ENCODE measurements at regions of chr17 and their contacts with region 1.

Region 1: GRCh38 chr17:43766413-43767052 is 7.9 kb upstream of the SOST start:
- DNase-seq: no peak
- H3K4me3 ChIP-seq: no peak overlapping the region
- H3K27ac ChIP-seq: no peak overlapping the region
- H3K4me1 ChIP-seq: no peaks in the 10 kb centered on the region
- H3K27me3 ChIP-seq: no peaks in the 10 kb centered on the region
- CTCF ChIP-seq: peak; percentile 86 to 95

Region 2: DNA sequence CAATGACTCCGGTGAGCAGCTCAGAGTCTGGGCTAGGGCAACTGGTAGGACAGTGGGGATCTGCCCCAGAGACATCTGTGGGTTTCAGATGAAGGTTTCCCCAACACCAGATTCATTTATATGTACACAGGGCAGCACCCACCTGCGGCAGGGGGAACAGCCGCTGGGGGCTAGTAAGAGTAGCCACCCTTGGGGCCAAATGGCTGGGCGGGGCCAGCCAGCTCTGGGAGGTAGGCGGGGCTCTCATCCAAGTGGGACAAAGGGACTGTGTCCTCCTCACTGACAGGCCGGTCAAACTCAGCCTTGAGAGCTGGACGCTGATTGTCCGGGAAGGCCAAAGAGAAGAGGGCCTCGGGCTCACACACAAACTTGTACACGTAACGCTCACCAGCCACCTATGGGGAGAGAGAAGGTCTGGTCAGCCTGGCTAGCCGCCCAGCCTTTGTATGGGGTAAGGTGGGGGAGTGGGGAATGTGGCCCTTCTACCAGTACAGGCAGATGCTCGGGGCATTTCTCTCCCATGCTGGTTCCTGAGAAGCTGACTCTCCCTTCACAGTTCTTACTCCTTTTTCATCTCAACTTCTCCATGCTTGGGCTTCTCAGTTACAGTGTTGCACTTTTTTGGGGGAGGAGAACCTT is 238.1 kb before region 1 on chr17:
- CTCF ChIA-PET with region 1: no interaction called
- dilution Hi-C with region 1: loop called (anchors 5 kb)
- in situ Hi-C with region 1: no loop called
- intact Hi-C with region 1: no loop called
- DNase-seq: no peak
- H3K4me3 ChIP-seq: no peak overlapping the region
- H3K27ac ChIP-seq: no peak overlapping the region
- H3K4me1 ChIP-seq: peaks cover 27% of the 10 kb centered on the region
- H3K27me3 ChIP-seq: no peaks in the 10 kb centered on the region
- CTCF ChIP-seq: no peak

Region 3: GRCh38 chr17:43753493-43754129 is 12.9 kb before region 1 on chr17:
- CTCF ChIA-PET with region 1: no interaction called
- dilution Hi-C with region 1: no loop called
- in situ Hi-C with region 1: no loop called
- intact Hi-C with region 1: loop called (anchors 1 kb)
- DNase-seq: peak; percentile 82
- H3K4me3 ChIP-seq: no peak overlapping the region
- H3K27ac ChIP-seq: no peak overlapping the region
- H3K4me1 ChIP-seq: peaks cover 32% of the 10 kb centered on the region
- H3K27me3 ChIP-seq: no peaks in the 10 kb centered on the region
- CTCF ChIP-seq: no peak

Region 4: GRCh38 chr17:43814714-43815113 is 48.2 kb after region 1 on chr17:
- CTCF ChIA-PET with region 1: no interaction called
- dilution Hi-C with region 1: no loop called
- in situ Hi-C with region 1: no loop called
- intact Hi-C with region 1: no loop called
- DNase-seq: peak; percentile 67
- H3K4me3 ChIP-seq: no peak overlapping the region
- H3K27ac ChIP-seq: no peak overlapping the region
- H3K4me1 ChIP-seq: peaks cover 12% of the 10 kb centered on the region
- H3K27me3 ChIP-seq: no peaks in the 10 kb centered on the region
- CTCF ChIP-seq: no peak

Region 5: DNA sequence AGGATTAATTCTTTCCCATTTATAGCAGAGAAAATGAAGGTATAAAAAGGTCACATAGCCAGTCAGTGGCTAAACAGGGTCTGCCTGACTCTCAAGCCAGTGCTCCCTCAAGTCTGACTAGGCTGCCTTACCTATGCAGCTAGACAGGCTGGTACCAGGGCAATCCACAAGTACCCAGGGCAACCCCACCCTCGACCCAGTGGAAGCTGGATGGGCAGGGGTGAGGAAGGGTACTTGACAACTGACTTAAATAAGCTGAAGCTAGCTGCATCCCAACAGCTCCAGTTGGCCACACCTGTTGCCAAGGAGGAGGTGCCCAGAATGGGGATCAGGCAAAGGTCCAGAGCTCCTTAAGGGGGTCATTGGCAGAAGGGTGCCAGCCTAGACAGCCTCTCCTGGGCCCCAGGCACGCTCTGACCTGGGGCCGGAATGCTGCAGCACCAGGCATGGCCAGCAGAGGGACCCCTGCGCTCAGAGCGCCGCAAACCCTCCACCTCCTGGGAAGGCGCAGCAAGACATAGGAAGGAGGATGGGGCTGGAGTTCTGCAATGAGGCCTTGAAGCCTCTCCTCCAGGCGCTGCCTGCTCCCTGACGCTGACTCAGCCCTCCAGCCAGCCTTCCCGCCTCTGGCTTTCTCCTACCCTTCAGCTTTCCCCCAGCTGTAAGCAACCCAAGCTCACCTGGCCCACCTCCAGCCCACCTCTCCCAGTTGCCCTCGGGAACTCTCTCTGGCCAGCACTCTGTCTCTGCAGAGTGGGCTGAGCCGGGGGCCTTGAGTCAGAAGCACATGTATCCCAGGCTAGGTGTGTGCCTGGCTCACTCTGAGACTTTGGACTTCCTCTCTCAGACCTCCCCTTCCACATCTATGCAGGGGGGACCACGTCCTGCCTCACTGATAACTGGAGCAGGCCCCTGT is 112.0 kb after region 1 on chr17:
- CTCF ChIA-PET with region 1: no interaction called
- dilution Hi-C with region 1: no loop called
- in situ Hi-C with region 1: no loop called
- intact Hi-C with region 1: no loop called
- DNase-seq: peak; percentile 76
- H3K4me3 ChIP-seq: no peak overlapping the region
- H3K27ac ChIP-seq: no peak overlapping the region
- H3K4me1 ChIP-seq: peaks cover 4% of the 10 kb centered on the region
- H3K27me3 ChIP-seq: no peaks in the 10 kb centered on the region
- CTCF ChIP-seq: peak; percentile 93 to 99

Measured in mammary epithelial cell (primary cell).